Psoas muscle (tissue), 8 donors: ENCODE measurements at regions of chr17 and their contacts with region 1.

Region 1: DNA sequence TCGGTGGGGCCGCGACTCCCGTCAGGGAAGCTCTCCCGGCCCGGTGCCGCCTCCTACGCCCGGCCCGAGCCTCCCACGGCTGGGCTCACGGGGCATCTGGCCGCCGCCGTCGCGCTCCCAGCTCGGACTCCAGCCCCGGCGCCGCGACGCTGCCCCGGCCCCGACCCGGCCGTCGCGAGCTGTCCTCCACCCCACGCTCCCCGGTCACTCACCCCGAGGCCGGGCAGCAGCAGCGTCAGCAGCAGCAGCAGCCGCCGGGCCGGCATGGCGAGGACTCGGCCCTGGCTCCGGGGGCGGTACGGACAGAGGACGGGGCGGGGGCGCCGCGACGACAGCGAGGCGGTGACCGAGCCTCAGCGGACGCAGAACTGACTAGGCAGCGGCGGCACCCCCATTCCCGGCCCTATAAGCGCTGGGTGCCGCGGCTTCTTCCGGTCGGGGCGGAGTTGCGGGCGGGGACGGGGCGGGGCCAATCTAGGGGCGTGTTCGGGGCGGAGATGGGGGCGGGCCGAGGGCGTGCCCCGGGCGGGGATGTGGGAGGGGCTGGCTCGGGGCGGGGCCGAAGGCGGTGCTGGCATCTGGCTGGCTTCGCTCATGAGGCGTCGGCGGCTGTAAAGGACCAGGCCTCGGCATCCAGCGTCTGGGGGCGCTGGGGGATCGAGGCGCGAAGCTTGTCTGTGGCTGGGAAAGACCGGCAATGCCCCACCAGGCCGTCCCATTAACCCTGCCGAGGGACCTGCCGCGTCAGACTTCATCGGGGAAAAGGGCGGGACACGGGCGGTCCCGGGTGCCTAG is at the start of gene ERN1:
- DNase-seq: peak; percentile 94 to 97
- ATAC-seq: peak; percentile 96 to 97 (median 97)
- H3K4me3 ChIP-seq: peak within 1 kb of the TSS; percentile 92
- H3K27ac ChIP-seq: peak within 1 kb of the TSS; percentile 98
- H3K4me1 ChIP-seq: peaks cover 5% of the 10 kb centered on the region
- H3K27me3 ChIP-seq: no peaks in the 10 kb centered on the region
- CTCF ChIP-seq: no peak
- total RNA-seq, gene ERN1: 10.6 to 16.6 (median 14.2) TPM

Region 2: GRCh38 chr17:63911657-63912426 is 218.1 kb before region 1 on chr17:
- intact Hi-C with region 1: loop called (anchors 5 to 10 kb)
- DNase-seq: no peak
- ATAC-seq: peak; percentile 81 to 89 (median 82)
- H3K4me3 ChIP-seq: no peak overlapping the region
- H3K27ac ChIP-seq: no peak overlapping the region
- H3K4me1 ChIP-seq: no peaks in the 10 kb centered on the region
- H3K27me3 ChIP-seq: no peaks in the 10 kb centered on the region
- CTCF ChIP-seq: peak; percentile 84

Region 3: DNA sequence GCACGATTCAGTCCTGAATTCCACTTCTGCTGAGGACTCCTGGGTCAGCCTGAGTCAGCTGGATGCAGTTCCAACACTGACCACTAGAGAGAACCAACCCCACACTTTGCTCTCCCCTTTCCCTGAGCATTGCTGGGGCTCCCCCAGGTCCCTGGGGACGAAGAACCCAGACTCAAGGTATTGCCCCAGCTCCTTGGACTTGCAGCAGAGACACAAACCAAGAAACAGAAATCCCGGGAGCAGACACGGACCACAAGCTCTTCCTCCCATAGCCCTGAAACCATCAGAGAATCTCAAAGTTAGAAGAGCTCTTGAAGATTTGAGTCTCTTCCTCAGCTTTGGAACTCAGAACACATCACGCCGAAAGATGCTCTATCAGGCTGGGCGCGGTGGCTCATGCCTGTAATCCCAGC is 210.6 kb before region 1 on chr17:
- intact Hi-C with region 1: loop called (anchors 5 to 10 kb)
- DNase-seq: peak; percentile 47 to 65
- ATAC-seq: peak; percentile 87 to 97 (median 92)
- H3K4me3 ChIP-seq: no peak overlapping the region
- H3K27ac ChIP-seq: no peak overlapping the region
- H3K4me1 ChIP-seq: no peaks in the 10 kb centered on the region
- H3K27me3 ChIP-seq: no peaks in the 10 kb centered on the region
- CTCF ChIP-seq: peak; percentile 95

Region 4: DNA sequence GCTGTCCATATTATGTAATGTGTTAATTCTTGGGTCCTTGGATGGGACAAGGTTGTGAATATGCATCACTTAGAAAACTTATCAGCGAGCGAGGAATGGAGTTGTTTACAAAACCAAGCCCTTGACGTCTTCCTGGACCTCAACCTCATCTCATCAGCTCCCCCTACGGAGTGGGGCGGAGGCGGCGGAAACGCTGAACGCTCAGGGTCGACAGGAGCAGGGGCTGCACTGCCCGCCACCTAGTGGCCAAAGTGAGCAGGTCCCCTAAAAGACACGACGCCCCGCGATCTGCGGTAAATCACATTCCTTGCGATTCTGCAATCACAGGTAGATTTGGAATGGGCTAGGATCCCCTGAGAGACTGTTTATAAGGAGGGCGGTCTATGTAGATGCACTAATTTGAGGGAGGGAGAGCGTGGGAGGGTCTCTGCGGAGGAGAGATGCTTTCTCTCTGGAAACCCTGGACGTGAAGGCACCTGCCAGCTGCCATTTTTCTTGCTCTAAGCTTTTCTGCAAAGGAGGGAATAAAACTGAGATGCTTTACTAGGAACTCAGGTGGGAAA is 104.1 kb before region 1 on chr17:
- intact Hi-C with region 1: loop called (anchors 2 kb)
- DNase-seq: peak; percentile 79 to 93
- ATAC-seq: peak; percentile 83 to 93 (median 88)
- H3K4me3 ChIP-seq: peak overlapping the region; percentile 53
- H3K27ac ChIP-seq: no peak overlapping the region
- H3K4me1 ChIP-seq: peaks cover 4% of the 10 kb centered on the region
- H3K27me3 ChIP-seq: no peaks in the 10 kb centered on the region
- CTCF ChIP-seq: peak; percentile 92

Region 5: GRCh38 chr17:64041912-64042311 is 88.0 kb before region 1 on chr17:
- intact Hi-C with region 1: loop called in 1 of 2 experiments (anchors 5 kb)
- DNase-seq: no peak
- ATAC-seq: no peak
- H3K4me3 ChIP-seq: no peak overlapping the region
- H3K27ac ChIP-seq: no peak overlapping the region
- H3K4me1 ChIP-seq: no peaks in the 10 kb centered on the region
- H3K27me3 ChIP-seq: no peaks in the 10 kb centered on the region
- CTCF ChIP-seq: no peak

Region 6: DNA sequence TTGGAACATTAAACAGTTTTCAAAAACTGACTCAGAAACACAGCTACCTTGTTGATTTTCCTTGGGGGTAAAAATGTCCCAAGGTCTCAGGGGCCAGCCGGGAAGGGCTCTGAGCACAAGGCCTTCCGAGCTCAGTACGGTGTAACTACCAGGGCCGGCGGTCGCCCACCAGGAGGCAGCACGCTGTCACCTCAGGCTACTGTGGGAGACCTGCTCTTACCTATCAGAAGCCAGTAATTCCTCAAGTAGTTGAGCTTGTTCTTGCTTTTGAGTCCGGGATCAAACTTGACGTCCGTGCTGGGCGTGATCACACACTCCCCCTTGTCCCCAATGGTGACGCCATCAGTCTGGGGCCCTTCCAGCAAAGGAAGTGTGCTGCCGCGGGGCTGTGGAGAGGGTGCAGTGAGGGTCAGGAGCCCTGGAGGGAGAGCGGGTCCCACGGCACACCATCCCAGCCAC is 66.2 kb before region 1 on chr17:
- intact Hi-C with region 1: loop called (anchors 2 to 10 kb)
- DNase-seq: peak; percentile 48 to 70
- ATAC-seq: peak; percentile 54 to 81 (median 76)
- H3K4me3 ChIP-seq: no peak overlapping the region
- H3K27ac ChIP-seq: no peak overlapping the region
- H3K4me1 ChIP-seq: no peaks in the 10 kb centered on the region
- H3K27me3 ChIP-seq: no peaks in the 10 kb centered on the region
- CTCF ChIP-seq: peak; percentile 51

Region 7: GRCh38 chr17:64174686-64175456 is 44.9 kb after region 1 on chr17:
- intact Hi-C with region 1: no loop called
- DNase-seq: peak in 1 of 2 donors; percentile 31
- ATAC-seq: peak; percentile 46 to 68 (median 62)
- H3K4me3 ChIP-seq: no peak overlapping the region
- H3K27ac ChIP-seq: peak overlapping the region; percentile 86
- H3K4me1 ChIP-seq: peaks cover 71% of the 10 kb centered on the region
- H3K27me3 ChIP-seq: no peaks in the 10 kb centered on the region
- CTCF ChIP-seq: no peak

Region 8: GRCh38 chr17:64216338-64217248 is 86.6 kb after region 1 on chr17:
- intact Hi-C with region 1: no loop called
- DNase-seq: peak; percentile 44 to 71
- ATAC-seq: peak; percentile 69 to 81 (median 75)
- H3K4me3 ChIP-seq: peak overlapping the region; percentile 28
- H3K27ac ChIP-seq: peak overlapping the region; percentile 80
- H3K4me1 ChIP-seq: peaks cover 44% of the 10 kb centered on the region
- H3K27me3 ChIP-seq: no peaks in the 10 kb centered on the region
- CTCF ChIP-seq: no peak

Region 9: DNA sequence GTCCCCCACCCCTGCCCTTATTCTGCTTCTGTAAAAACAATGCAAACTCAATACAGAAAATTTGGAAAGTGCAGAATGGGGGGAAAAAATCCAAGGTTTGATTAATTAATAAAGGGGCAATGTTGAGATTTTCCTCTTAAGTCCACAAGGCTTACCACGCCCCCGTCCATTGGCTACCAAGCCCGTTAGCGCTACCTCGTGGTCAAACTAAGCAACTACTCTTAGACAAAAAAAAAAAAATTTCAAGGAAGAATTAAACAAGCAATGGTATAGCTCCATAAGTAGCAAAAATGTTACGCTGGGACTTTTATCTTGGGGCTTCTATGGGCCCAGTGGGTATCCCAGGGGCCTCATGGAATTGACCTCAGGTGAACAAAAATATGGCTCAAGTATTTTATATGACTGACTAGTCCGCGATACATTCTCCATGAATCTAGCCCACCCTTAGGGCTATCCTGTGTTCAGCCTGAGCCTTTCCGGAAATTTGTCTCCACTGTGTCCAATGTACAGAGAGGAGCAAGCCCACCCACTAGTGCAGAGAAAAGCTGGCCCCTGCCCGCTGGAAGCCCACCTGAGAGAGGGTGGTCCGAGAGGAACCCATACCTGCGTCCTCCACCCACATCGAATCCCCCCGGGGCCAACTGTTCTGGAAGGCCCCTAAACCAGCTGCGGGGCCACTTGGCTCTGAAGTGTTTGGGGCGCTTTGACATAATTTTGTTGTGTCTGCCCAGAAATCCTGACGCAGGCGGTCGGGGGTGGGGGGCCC is 152.2 kb after region 1 on chr17:
- intact Hi-C with region 1: loop called (anchors 5 kb)
- DNase-seq: peak; percentile 37 to 59
- ATAC-seq: peak; percentile 48 to 71 (median 65)
- H3K4me3 ChIP-seq: peak overlapping the region; percentile 35
- H3K27ac ChIP-seq: peak overlapping the region; percentile 51
- H3K4me1 ChIP-seq: peaks cover 28% of the 10 kb centered on the region
- H3K27me3 ChIP-seq: no peaks in the 10 kb centered on the region
- CTCF ChIP-seq: peak; percentile 87